ENCODE measurements at regions of chr3 and their contacts with region 1.

Region 1: DNA sequence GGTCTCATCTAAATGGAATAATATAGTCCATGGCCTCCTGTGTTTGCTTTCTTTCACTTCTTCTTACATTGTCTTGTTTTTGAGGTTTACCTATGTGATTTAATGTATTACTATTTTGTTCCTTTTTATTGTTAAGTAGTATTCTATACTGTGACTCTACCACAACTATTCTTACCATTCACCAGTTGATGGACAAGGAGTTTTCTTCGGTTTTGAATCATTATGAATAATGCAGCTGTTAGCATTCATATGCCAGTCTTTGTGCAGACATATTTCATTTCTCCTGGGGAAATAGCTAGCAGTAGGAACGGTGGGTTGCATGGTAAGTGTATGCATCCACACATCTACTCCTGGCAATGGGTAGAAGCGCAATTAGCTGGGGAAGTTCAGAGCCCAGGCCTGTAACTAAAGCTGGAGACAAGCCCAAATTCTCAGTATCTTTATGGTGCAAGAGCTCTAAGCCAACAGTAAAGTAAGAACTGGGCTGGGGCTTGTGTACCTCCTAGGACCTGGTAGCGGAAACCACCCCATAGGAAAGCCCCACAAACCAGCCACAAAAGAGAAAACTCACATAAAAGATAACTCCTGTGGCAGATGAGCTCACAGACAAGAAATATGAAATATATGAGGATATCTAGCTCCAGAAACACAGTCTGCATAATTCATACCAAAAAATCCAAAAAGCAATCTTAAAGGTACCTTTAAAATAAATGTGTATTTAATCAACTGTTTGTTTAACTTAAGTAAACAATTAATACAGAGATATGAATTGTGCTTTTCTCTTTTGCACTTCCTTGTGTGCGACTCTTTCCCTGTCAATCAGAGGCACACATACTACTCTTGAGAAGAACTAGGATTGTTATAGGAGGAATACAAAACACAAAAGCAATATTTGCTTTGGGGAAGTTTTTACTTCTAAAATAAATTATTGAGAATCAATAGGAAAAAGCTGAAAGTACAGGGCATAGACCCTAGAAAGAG is 2.7 kb upstream of the CSTA start:
- DNase-seq: peak; percentile 62
- H3K4me3 Mint-ChIP-seq: no peak overlapping the region
- H3K27ac Mint-ChIP-seq: peak overlapping the region; percentile 56
- H3K4me1 Mint-ChIP-seq: peaks cover 20% of the 10 kb centered on the region
- H3K27me3 Mint-ChIP-seq: peaks cover 4% of the 10 kb centered on the region

Region 2: DNA sequence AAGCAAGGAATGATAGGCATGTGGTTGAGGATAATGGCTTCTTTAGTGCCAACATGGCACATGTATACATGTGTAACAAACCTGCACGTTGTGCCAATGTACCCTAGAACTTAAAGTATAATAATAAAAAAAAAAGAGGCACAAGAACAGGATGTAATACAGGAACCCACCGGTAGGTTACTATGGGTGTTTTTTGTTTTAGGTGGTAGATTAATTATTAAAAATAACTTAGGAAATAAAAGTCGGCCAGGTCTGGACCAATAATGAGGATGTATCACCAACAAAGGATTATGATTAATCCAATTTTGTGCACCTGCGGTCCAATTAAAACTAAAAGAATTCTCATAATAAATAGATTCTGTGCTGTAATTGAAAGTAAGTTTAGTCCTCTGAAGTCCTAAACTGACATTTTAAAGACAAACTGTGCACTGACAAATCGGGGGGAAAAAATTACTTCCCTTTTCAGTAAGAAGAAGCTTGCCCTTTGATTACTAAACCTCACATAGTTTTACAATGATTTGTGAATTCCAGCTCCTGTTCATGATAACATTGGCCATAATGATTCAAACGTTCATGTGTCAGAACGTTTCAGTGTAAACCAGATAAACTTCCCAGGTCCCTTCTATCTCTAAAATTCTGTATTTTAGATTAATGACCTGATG is 76.7 kb before region 1 on chr3:
- CTCF ChIA-PET with region 1: no interaction called
- POLR2A ChIA-PET with region 1: no interaction called
- intact Hi-C with region 1: no loop called
- DNase-seq: no peak
- H3K4me3 Mint-ChIP-seq: peak overlapping the region; percentile 48
- H3K27ac Mint-ChIP-seq: peak overlapping the region; percentile 43
- H3K4me1 Mint-ChIP-seq: peaks cover 16% of the 10 kb centered on the region
- H3K27me3 Mint-ChIP-seq: peaks cover 12% of the 10 kb centered on the region

Region 3: DNA sequence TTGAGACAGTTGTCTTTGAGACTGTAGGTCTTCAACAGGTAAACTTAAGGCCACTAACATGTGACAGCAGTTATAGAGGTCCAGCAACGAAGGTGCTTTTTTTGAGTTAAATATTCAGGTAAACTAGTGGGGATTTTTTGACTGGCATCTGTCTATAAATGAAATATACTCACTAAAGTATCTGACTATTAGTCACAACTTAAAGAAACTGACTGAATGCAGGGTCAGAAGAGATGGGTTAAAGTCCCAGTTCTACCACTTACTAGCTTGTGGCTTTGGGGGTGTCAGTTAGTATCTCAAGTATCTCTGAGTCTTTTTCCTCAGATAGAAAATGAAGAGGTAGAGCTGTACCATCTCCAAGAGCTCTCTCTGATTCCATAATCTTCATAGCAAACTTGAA is 42.7 kb after region 1 on chr3:
- CTCF ChIA-PET with region 1: no interaction called
- POLR2A ChIA-PET with region 1: no interaction called
- intact Hi-C with region 1: loop called (anchors 1 kb)
- DNase-seq: no peak
- H3K4me3 Mint-ChIP-seq: no peak overlapping the region
- H3K27ac Mint-ChIP-seq: peak overlapping the region; percentile 94
- H3K4me1 Mint-ChIP-seq: peaks cover 26% of the 10 kb centered on the region
- H3K27me3 Mint-ChIP-seq: no peaks in the 10 kb centered on the region

Region 4: GRCh38 chr3:122515020-122515468 is 192.7 kb after region 1 on chr3:
- CTCF ChIA-PET with region 1: no interaction called
- POLR2A ChIA-PET with region 1: no interaction called
- intact Hi-C with region 1: no loop called
- DNase-seq: no peak
- H3K4me3 Mint-ChIP-seq: peak overlapping the region; percentile 77
- H3K27ac Mint-ChIP-seq: peak overlapping the region; percentile 85
- H3K4me1 Mint-ChIP-seq: peaks cover 32% of the 10 kb centered on the region
- H3K27me3 Mint-ChIP-seq: no peaks in the 10 kb centered on the region

Measured in activated CD4-positive, alpha-beta memory T cell treated with anti-CD3 and anti-CD28 coated beads for 36 hours (primary cell).